ENCODE measurements at regions of chr2 and their contacts with region 1.

Region 1: DNA sequence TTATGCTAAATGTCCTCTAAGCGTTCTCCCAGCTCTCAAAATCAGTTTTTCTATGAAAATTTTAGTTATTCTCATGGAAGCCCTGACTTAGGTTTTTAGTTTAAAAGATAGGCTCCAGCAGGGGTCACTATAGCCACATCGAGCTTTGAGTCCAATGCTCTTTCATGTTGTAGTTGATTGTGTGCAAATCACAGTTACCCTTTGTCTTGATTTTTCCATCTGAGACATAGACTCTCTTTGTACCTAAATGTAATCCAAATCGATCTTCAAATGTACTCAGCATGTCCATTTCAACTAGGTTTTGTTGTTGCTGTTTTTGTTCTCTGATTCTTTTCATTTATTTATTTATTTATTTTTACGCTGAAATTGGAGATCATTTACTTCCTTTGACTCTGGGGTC is 26.4 kb upstream of the MSTN start:
- DNase-seq: peak in 7 of 9 donors; percentile 23 to 65 (median 54)
- ATAC-seq: peak; percentile 64
- H3K4me3 ChIP-seq: no peak overlapping the region
- H3K4me3 Mint-ChIP-seq: no peak overlapping the region
- H3K27ac ChIP-seq: no peak overlapping the region
- H3K27ac Mint-ChIP-seq: no peak overlapping the region
- H3K4me1 ChIP-seq: no peaks in the 10 kb centered on the region
- H3K4me1 Mint-ChIP-seq: no peaks in the 10 kb centered on the region
- H3K27me3 ChIP-seq: no peaks in the 10 kb centered on the region
- H3K27me3 Mint-ChIP-seq: peaks cover 0 to 4% (median 0%) of the 10 kb centered on the region in 5 donors

Region 2: DNA sequence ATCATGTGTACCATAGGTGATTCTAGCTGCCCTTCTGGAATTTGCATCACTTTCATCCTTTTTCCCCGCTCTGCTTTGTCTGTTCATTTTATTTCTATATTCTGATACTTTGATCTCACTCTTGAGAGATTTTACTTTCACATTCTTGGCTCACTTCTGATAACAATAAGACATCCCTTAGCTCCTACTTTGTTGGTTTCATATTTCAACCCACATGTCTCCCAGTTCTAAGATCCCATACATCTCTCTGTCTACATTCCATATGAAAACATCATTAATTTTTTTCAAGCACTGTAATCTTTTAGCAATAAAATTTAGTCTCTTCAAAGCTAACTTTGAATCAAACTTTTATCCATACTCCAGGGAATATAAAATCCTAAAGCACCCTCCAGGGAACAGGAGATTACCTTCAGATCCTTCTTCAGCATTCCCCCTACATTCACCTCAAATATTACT is 1039.2 kb before region 1 on chr2:
- CTCF ChIA-PET with region 1: no interaction called
- POLR2A ChIA-PET with region 1: no interaction called
- intact Hi-C with region 1: no loop called
- DNase-seq: no peak
- ATAC-seq: no peak
- H3K4me3 ChIP-seq: no peak overlapping the region
- H3K4me3 Mint-ChIP-seq: no peak overlapping the region
- H3K27ac ChIP-seq: no peak overlapping the region
- H3K27ac Mint-ChIP-seq: no peak overlapping the region
- H3K4me1 ChIP-seq: no peaks in the 10 kb centered on the region
- H3K4me1 Mint-ChIP-seq: peaks cover 0 to 2% (median 0%) of the 10 kb centered on the region in 7 donors
- H3K27me3 ChIP-seq: no peaks in the 10 kb centered on the region
- H3K27me3 Mint-ChIP-seq: no peaks in the 10 kb centered on the region

Region 3: GRCh38 chr2:189601043-189601442 is 487.9 kb before region 1 on chr2:
- CTCF ChIA-PET with region 1: no interaction called
- POLR2A ChIA-PET with region 1: no interaction called
- intact Hi-C with region 1: no loop called
- DNase-seq: no peak
- ATAC-seq: peak; percentile 44
- H3K4me3 ChIP-seq: no peak overlapping the region
- H3K4me3 Mint-ChIP-seq: no peak overlapping the region
- H3K27ac ChIP-seq: no peak overlapping the region
- H3K27ac Mint-ChIP-seq: no peak overlapping the region
- H3K4me1 ChIP-seq: peaks cover 0 to 2% of the 10 kb centered on the region in 2 donors
- H3K4me1 Mint-ChIP-seq: peaks cover 0 to 14% (median 2%) of the 10 kb centered on the region in 7 donors
- H3K27me3 ChIP-seq: no peaks in the 10 kb centered on the region
- H3K27me3 Mint-ChIP-seq: peaks cover 0 to 2% (median 0%) of the 10 kb centered on the region in 5 donors

Region 4: GRCh38 chr2:190121971-190122370 is 33.1 kb after region 1 on chr2:
- CTCF ChIA-PET with region 1: no interaction called
- POLR2A ChIA-PET with region 1: no interaction called
- intact Hi-C with region 1: loop called in 1 of 2 experiments (anchors 1 kb)
- DNase-seq: peak in 1 of 9 donors; percentile 20
- ATAC-seq: no peak
- H3K4me3 ChIP-seq: no peak overlapping the region
- H3K4me3 Mint-ChIP-seq: no peak overlapping the region
- H3K27ac ChIP-seq: no peak overlapping the region
- H3K27ac Mint-ChIP-seq: peak overlapping the region in 1 of 9 donors; percentile 20
- H3K4me1 ChIP-seq: no peaks in the 10 kb centered on the region
- H3K4me1 Mint-ChIP-seq: peaks cover 0 to 21% (median 12%) of the 10 kb centered on the region in 7 donors
- H3K27me3 ChIP-seq: no peaks in the 10 kb centered on the region
- H3K27me3 Mint-ChIP-seq: peaks cover 0 to 6% (median 0%) of the 10 kb centered on the region in 5 donors

Region 5: DNA sequence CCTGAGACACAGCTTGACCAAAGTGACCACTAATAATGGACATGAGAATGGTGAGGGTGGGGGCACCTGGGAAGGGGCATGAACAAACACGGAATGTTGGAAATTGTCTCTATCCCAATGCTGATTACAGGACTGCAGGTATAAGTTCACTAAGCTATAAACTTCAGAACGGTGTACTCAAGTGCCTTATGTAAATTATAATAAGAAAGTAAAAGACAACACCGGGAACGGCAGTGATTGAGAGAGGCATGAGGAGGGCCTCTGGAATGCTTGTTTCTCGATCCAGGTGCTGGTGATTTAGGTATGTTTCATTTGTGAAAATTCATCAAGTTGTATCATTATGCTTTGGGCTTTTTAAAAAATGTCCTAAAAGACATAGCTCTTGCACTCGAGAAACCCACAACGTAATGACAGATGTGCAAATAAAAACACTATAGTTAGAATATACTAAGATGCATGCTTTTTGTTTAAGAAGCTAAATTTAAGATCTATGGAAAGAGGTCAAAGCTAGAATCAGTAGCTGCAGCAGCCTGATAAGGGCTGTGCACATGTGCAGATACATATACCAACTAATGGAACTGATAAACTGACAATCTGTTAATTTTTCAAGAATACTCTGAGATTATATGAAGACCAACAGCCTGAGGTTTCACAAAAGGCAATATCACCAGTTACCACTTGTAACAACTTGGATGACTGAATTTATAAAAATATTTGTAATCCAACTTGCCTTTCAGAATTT is 223.1 kb after region 1 on chr2:
- CTCF ChIA-PET with region 1: no interaction called
- POLR2A ChIA-PET with region 1: no interaction called
- intact Hi-C with region 1: loop called (anchors 1 kb)
- DNase-seq: no peak
- ATAC-seq: no peak
- H3K4me3 ChIP-seq: no peak overlapping the region
- H3K4me3 Mint-ChIP-seq: no peak overlapping the region
- H3K27ac ChIP-seq: no peak overlapping the region
- H3K27ac Mint-ChIP-seq: no peak overlapping the region
- H3K4me1 ChIP-seq: no peaks in the 10 kb centered on the region
- H3K4me1 Mint-ChIP-seq: peaks cover 7 to 41% (median 24%) of the 10 kb centered on the region in 7 donors
- H3K27me3 ChIP-seq: no peaks in the 10 kb centered on the region
- H3K27me3 Mint-ChIP-seq: no peaks in the 10 kb centered on the region

Region 6: DNA sequence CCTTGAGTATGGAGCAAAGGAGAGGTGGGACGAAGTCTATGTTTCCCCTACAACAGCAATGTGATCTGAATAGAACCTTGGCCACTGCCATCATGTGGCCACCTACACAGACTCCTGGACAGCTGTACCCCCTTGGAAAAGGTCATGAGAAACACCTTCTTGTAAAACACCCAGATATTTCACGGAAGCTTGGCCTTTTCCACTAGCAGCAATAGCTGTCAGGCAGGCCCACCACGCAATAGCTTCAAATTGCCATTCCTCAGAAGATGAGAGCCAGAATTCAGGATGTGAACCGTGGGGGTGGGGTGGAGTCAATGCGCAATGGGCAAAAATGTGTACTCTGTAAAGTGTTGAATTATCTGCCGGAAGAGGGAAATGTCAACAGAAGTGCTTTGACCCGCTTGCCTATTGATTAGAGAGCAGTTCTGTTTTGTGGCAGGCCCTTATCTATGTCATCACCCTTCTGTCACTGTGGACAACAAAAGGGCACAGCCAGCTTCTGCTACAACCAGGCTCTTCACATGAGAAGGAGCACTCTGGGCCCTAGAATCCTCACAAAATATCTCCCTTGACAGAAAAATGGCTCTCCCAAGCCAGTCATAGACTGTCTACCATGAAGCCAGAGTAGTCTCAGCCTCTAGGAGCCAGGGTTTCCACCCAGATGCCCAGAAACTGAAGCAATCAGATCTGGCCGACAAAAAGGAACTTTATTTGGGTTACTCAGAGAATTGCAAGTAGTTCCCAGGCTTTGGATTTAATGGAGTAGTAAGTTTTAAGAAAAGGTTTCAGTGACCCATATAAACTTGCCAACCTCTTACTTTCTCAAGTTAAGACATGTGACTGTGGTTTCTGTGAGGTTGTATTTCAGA is 264.0 kb after region 1 on chr2:
- CTCF ChIA-PET with region 1: interaction called, 4 read pairs
- POLR2A ChIA-PET with region 1: no interaction called
- intact Hi-C with region 1: loop called in 1 of 2 experiments (anchors 5 kb)
- DNase-seq: no peak
- ATAC-seq: peak; percentile 60
- H3K4me3 ChIP-seq: no peak overlapping the region
- H3K4me3 Mint-ChIP-seq: no peak overlapping the region
- H3K27ac ChIP-seq: no peak overlapping the region
- H3K27ac Mint-ChIP-seq: no peak overlapping the region
- H3K4me1 ChIP-seq: no peaks in the 10 kb centered on the region
- H3K4me1 Mint-ChIP-seq: no peaks in the 10 kb centered on the region
- H3K27me3 ChIP-seq: no peaks in the 10 kb centered on the region
- H3K27me3 Mint-ChIP-seq: peaks cover 0 to 13% (median 4%) of the 10 kb centered on the region in 5 donors

Region 7: GRCh38 chr2:190511104-190511503 is 422.2 kb after region 1 on chr2:
- CTCF ChIA-PET with region 1: no interaction called
- POLR2A ChIA-PET with region 1: no interaction called
- intact Hi-C with region 1: loop called in 1 of 2 experiments (anchors 5 kb)
- DNase-seq: no peak
- ATAC-seq: no peak
- H3K4me3 ChIP-seq: no peak overlapping the region
- H3K4me3 Mint-ChIP-seq: no peak overlapping the region
- H3K27ac ChIP-seq: no peak overlapping the region
- H3K27ac Mint-ChIP-seq: peak overlapping the region in 4 of 9 donors; percentile 1 to 64 (median 43)
- H3K4me1 ChIP-seq: peaks cover 8 to 10% of the 10 kb centered on the region in 2 donors
- H3K4me1 Mint-ChIP-seq: peaks cover 7 to 36% (median 26%) of the 10 kb centered on the region in 7 donors
- H3K27me3 ChIP-seq: no peaks in the 10 kb centered on the region
- H3K27me3 Mint-ChIP-seq: no peaks in the 10 kb centered on the region

Region 8: DNA sequence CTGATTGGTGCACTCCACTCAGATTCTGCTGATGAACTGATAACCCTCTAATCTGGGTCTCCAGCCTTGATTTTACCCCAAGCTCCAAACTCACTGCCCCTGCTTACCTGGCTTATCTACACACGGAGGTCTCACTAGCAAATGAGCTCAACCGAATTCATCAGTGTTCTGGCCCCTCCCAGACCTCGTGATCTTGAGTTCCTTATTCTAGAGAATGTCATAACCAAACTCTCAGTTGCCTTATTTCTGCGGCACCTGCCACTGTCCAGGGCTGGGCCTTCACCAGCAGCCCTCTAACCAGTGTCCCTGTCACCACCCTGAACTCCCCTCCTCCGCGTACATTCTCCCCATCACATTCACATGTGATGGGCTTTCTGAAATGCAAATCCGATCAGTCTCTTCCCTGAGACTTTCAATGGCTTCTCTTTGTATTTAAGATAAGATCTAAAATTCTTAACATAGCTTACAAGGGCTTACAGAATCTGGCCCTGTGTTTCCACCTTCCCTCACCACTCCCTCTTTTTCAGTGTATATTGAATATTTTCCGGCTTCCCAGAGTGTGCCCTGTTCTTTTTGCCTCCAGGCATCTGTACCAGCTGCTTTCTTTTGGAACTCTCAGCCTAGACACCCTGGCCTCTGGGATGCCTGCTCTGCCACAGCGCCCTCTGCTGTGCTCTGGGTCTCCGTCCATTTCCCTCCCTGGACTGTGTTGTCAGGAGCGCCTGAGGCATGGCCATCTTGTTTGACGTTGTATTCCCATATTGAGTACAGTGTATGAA is 591.1 kb after region 1 on chr2:
- CTCF ChIA-PET with region 1: interaction called, 5 read pairs
- POLR2A ChIA-PET with region 1: no interaction called
- intact Hi-C with region 1: loop called in 1 of 2 experiments (anchors 2 kb)
- DNase-seq: peak; percentile 27 to 59 (median 46)
- ATAC-seq: peak; percentile 92
- H3K4me3 ChIP-seq: no peak overlapping the region
- H3K4me3 Mint-ChIP-seq: peak overlapping the region in 2 of 10 donors; percentile 8
- H3K27ac ChIP-seq: no peak overlapping the region
- H3K27ac Mint-ChIP-seq: peak overlapping the region in 7 of 9 donors; percentile 7 to 74 (median 52)
- H3K4me1 ChIP-seq: peaks cover 5 to 10% of the 10 kb centered on the region in 2 donors
- H3K4me1 Mint-ChIP-seq: peaks cover 17 to 49% (median 41%) of the 10 kb centered on the region in 7 donors
- H3K27me3 ChIP-seq: no peaks in the 10 kb centered on the region
- H3K27me3 Mint-ChIP-seq: no peaks in the 10 kb centered on the region

Region 9: GRCh38 chr2:191030521-191031154 is 941.7 kb after region 1 on chr2:
- CTCF ChIA-PET with region 1: no interaction called
- POLR2A ChIA-PET with region 1: no interaction called
- intact Hi-C with region 1: loop called in 1 of 2 experiments (anchors 10 kb)
- DNase-seq: peak in 7 of 9 donors; percentile 31 to 64 (median 59)
- ATAC-seq: peak; percentile 86
- H3K4me3 ChIP-seq: no peak overlapping the region
- H3K4me3 Mint-ChIP-seq: peak overlapping the region in 4 of 10 donors; percentile 6 to 41 (median 20)
- H3K27ac ChIP-seq: peak overlapping the region; percentile 52
- H3K27ac Mint-ChIP-seq: peak overlapping the region; percentile 36 to 83 (median 73)
- H3K4me1 ChIP-seq: peaks cover 27 to 30% of the 10 kb centered on the region in 2 donors
- H3K4me1 Mint-ChIP-seq: peaks cover 15 to 66% (median 37%) of the 10 kb centered on the region in 7 donors
- H3K27me3 ChIP-seq: no peaks in the 10 kb centered on the region
- H3K27me3 Mint-ChIP-seq: no peaks in the 10 kb centered on the region

Measured in naive thymus-derived CD4-positive, alpha-beta T cell (primary cell).